Activated CD8-positive, alpha-beta T cell treated with anti-CD3 and anti-CD28 coated beads, Interleukin-2, amount 10 ng/mL, durations not matched to agents 7 days and 5 days (primary cell): ENCODE measurements at regions of chr20 and their contacts with region 1.

Region 1: DNA sequence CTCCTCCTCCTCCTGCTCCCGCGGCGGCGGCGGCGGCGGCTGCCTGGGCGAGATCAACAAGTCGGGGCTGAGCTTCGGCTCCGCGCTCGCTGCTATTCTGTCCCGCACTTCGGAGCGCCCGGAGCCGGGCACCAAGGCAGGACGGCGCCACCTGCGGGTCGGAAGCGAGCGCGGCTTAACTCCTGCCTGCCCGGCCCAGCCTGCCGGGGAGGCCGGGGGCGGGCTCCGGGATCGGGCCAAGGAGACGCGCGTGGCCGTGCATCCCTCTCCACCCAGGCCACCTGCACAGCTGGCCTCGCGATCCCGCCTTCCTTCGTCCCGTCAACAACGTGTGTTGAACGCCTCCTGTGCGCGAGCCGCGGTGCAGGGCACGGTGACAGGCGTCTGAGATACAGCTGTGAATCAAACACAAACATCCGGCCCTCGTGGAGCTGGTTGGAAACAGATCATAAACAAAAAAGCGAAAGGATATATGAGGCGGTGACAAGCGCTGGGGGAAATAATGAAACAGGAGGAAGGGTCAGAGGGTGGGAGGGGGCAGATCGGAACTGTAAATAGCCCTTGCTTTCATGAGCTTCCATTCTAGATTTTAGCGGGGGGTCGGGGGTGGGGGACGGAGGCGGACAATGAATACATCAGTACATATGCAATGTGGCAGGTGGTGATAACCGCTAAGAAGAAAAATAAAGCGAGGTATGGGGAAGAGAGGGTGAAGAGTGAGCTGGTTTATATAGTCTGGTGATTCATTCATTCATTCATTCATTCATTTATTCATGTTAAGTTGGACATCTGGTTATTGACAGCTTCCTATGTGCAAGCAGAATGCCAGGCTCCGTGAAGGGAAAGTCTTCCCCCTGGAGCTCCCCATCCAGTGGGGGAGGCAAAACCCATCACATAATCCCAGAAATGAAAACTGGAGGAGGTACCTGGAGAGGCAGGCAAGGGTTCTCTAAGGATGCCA is 2.0 kb upstream of the KCNB1 start:
- DNase-seq: peak; percentile 73
- ATAC-seq: peak; percentile 92
- H3K4me3 Mint-ChIP-seq: peak overlapping the region; percentile 68
- H3K27ac Mint-ChIP-seq: peak overlapping the region; percentile 11
- H3K4me1 Mint-ChIP-seq: peaks cover 3% of the 10 kb centered on the region
- H3K27me3 Mint-ChIP-seq: peaks cover 49% of the 10 kb centered on the region

Region 2: DNA sequence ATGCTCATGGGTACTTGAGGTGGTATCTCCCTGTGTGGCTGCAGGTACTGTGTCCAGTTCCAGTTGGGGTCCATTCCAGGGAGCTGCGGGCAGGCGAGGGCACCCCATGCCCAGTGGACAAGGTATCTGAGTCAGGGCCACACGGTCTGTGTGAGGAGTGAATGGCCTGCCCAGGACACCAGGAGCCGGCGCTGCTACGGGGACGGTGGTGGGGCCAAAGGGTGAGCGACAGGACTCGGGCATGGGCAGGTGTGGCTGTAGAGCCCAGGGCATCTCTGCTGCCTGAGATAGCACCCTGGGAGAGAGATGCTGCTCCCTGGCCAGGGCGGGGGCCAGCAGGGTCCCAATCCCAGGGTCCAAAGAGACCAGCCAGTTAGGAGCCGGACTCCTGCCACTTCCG is 149.0 kb before region 1 on chr20:
- CTCF ChIA-PET with region 1: interaction called, 23 read pairs
- POLR2A ChIA-PET with region 1: no interaction called
- DNase-seq: no peak
- ATAC-seq: no peak
- H3K4me3 Mint-ChIP-seq: no peak overlapping the region
- H3K27ac Mint-ChIP-seq: no peak overlapping the region
- H3K4me1 Mint-ChIP-seq: no peaks in the 10 kb centered on the region
- H3K27me3 Mint-ChIP-seq: peaks cover 14% of the 10 kb centered on the region

Region 3: DNA sequence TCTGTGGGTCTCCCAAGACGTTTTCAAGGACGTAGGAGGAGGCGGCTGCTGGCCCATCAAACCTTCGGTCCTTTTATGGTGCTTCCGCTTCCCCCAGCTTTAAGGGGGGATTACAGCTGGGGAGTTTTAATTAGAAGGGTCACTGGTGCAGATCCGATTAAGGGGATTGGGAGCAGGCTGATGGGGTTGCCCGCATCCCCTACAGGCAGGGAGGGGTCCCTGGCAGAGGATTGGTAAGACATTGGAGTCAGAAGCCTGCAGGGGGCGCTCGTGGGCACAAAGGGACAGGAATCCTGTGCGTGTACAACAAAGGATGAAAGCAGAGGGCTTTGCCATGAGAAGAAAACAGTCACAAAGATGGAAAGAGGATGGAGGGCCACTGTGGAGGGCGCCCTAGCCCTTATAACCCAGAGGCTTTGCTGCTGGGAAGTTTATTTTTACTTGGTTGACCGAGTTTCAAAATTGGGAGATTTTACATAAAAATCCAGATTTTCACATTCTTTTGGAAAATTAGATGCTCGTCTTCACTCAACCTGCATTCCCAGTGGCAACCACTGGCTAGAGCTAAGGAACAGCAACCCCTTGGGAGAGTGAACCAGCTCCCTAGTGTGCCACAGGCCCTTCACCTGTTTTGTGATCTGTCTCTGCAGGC is 99.9 kb before region 1 on chr20:
- CTCF ChIA-PET with region 1: interaction called, 16 read pairs
- POLR2A ChIA-PET with region 1: no interaction called
- DNase-seq: peak; percentile 77
- ATAC-seq: peak; percentile 76
- H3K4me3 Mint-ChIP-seq: no peak overlapping the region
- H3K27ac Mint-ChIP-seq: no peak overlapping the region
- H3K4me1 Mint-ChIP-seq: no peaks in the 10 kb centered on the region
- H3K27me3 Mint-ChIP-seq: peaks cover 24% of the 10 kb centered on the region

Region 4: GRCh38 chr20:49496553-49497397 is 12.3 kb after region 1 on chr20:
- CTCF ChIA-PET with region 1: interaction called, 16 read pairs
- POLR2A ChIA-PET with region 1: no interaction called
- DNase-seq: no peak
- ATAC-seq: no peak
- H3K4me3 Mint-ChIP-seq: no peak overlapping the region
- H3K27ac Mint-ChIP-seq: no peak overlapping the region
- H3K4me1 Mint-ChIP-seq: no peaks in the 10 kb centered on the region
- H3K27me3 Mint-ChIP-seq: peaks cover 37% of the 10 kb centered on the region

Region 5: GRCh38 chr20:49508435-49509199 is 24.2 kb after region 1 on chr20:
- CTCF ChIA-PET with region 1: interaction called, 19 read pairs
- POLR2A ChIA-PET with region 1: no interaction called
- DNase-seq: no peak
- ATAC-seq: peak; percentile 61
- H3K4me3 Mint-ChIP-seq: no peak overlapping the region
- H3K27ac Mint-ChIP-seq: no peak overlapping the region
- H3K4me1 Mint-ChIP-seq: no peaks in the 10 kb centered on the region
- H3K27me3 Mint-ChIP-seq: peaks cover 12% of the 10 kb centered on the region